T-cell (primary cell): ENCODE measurements at regions of chr3 and their contacts with region 1.

Region 1: DNA sequence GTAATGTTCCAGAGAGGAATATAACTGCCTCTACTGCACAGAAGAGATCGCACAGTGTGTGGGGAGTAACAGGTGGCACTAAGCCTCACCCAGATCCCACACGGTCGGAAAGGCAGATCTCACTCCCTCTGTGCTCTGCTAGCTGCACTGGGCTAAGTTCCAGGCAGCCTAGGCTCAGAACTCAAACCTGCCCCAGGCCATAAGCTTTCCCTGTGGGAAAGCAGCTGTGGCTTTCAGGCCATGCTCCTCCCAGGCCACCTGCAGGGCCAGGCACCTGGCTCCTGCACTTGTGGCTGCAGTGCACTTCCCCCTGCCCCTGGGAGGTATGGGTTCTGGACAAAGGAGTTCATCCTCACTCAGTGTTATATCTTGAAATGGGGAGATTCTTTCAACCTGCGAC is 27.5 kb downstream of the PCCB start:
- DNase-seq: no peak
- ATAC-seq: no peak
- H3K4me3 ChIP-seq: no peak overlapping the region
- H3K4me3 Mint-ChIP-seq: no peak overlapping the region
- H3K27ac ChIP-seq: no peak overlapping the region
- H3K27ac Mint-ChIP-seq: no peak overlapping the region
- H3K4me1 ChIP-seq: peaks cover 0 to 3% of the 10 kb centered on the region in 2 experiments
- H3K4me1 Mint-ChIP-seq: peaks cover 26 to 29% (median 27%) of the 10 kb centered on the region in 3 donors
- H3K27me3 ChIP-seq: no peaks in the 10 kb centered on the region
- H3K27me3 Mint-ChIP-seq: no peaks in the 10 kb centered on the region

Region 2: GRCh38 chr3:136258199-136258598 is 19.4 kb before region 1 on chr3:
- CTCF ChIA-PET with region 1: interaction called in 1 of 2 experiments, 10 read pairs
- POLR2A ChIA-PET with region 1: interaction called in 1 of 2 experiments, 3 read pairs
- DNase-seq: no peak
- ATAC-seq: no peak
- H3K4me3 ChIP-seq: no peak overlapping the region
- H3K4me3 Mint-ChIP-seq: no peak overlapping the region
- H3K27ac ChIP-seq: no peak overlapping the region
- H3K27ac Mint-ChIP-seq: peak overlapping the region in 1 of 2 donors; percentile 30
- H3K4me1 ChIP-seq: no peaks in the 10 kb centered on the region
- H3K4me1 Mint-ChIP-seq: peaks cover 4 to 9% (median 5%) of the 10 kb centered on the region in 3 donors
- H3K27me3 ChIP-seq: no peaks in the 10 kb centered on the region
- H3K27me3 Mint-ChIP-seq: no peaks in the 10 kb centered on the region

Region 3: GRCh38 chr3:136465296-136465695 is 187.7 kb after region 1 on chr3:
- CTCF ChIA-PET with region 1: interaction called in 1 of 2 experiments, 11 read pairs
- POLR2A ChIA-PET with region 1: no interaction called
- DNase-seq: no peak
- ATAC-seq: no peak
- H3K4me3 ChIP-seq: no peak overlapping the region
- H3K4me3 Mint-ChIP-seq: no peak overlapping the region
- H3K27ac ChIP-seq: no peak overlapping the region
- H3K27ac Mint-ChIP-seq: no peak overlapping the region
- H3K4me1 ChIP-seq: no peaks in the 10 kb centered on the region
- H3K4me1 Mint-ChIP-seq: peaks cover 3 to 17% (median 5%) of the 10 kb centered on the region in 3 donors
- H3K27me3 ChIP-seq: no peaks in the 10 kb centered on the region
- H3K27me3 Mint-ChIP-seq: no peaks in the 10 kb centered on the region

Region 4: GRCh38 chr3:136632625-136633081 is 355.0 kb after region 1 on chr3:
- CTCF ChIA-PET with region 1: interaction called in 1 of 2 experiments, 11 read pairs
- POLR2A ChIA-PET with region 1: no interaction called
- DNase-seq: no peak
- ATAC-seq: no peak
- H3K4me3 ChIP-seq: no peak overlapping the region
- H3K4me3 Mint-ChIP-seq: no peak overlapping the region
- H3K27ac ChIP-seq: no peak overlapping the region
- H3K27ac Mint-ChIP-seq: no peak overlapping the region
- H3K4me1 ChIP-seq: peaks cover 0 to 4% of the 10 kb centered on the region in 2 experiments
- H3K4me1 Mint-ChIP-seq: peaks cover 45 to 51% (median 51%) of the 10 kb centered on the region in 3 donors
- H3K27me3 ChIP-seq: no peaks in the 10 kb centered on the region
- H3K27me3 Mint-ChIP-seq: no peaks in the 10 kb centered on the region